ENCODE measurements at regions of chr19 and their contacts with region 1.

Region 1: DNA sequence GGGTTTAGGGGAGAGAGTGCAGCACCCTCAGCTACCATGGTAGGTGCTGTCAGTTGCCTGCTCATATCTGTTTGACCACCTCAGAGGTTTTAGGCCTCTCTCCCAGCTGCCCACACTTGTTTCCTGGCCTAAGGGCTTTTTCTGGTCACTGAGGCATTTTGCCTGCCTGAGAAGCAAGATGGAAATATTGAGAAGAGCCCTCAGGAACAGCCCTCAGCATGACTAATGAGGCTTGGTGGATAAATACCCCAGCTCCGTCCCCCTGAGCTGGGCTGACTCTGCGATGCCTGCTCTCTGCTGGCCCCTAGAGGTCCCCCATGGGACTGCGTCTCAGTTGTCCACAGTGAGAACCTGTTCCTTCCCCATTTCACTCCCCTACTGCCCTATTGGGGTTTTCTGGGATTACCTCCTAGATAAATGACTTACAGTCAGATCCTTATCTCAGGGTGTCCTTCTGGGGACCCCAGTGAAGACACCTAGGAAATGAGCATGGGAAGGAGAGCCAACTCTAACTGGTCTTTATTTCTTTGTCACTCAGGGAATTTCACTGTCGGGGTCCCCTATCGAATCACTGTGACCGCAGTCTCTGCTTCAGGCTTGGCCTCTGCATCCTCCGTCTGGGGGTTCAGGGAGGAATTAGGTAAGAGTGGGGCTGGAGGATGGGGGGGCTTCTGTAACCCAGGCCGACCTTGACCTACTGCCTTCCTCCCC is 13.3 kb downstream of the PALM3 start:
- DNase-seq: peak; percentile 46 to 80 (median 67)
- ATAC-seq: peak; percentile 96
- H3K4me3 ChIP-seq: no peak overlapping the region
- H3K4me3 Mint-ChIP-seq: no peak overlapping the region
- H3K27ac ChIP-seq: peak overlapping the region; percentile 42
- H3K27ac Mint-ChIP-seq: peak overlapping the region in 8 of 9 donors; percentile 21 to 77 (median 61)
- H3K4me1 ChIP-seq: peaks cover 0 to 4% of the 10 kb centered on the region in 2 donors
- H3K4me1 Mint-ChIP-seq: peaks cover 0 to 5% (median 0%) of the 10 kb centered on the region in 7 donors
- H3K27me3 ChIP-seq: no peaks in the 10 kb centered on the region
- H3K27me3 Mint-ChIP-seq: no peaks in the 10 kb centered on the region

Region 2: DNA sequence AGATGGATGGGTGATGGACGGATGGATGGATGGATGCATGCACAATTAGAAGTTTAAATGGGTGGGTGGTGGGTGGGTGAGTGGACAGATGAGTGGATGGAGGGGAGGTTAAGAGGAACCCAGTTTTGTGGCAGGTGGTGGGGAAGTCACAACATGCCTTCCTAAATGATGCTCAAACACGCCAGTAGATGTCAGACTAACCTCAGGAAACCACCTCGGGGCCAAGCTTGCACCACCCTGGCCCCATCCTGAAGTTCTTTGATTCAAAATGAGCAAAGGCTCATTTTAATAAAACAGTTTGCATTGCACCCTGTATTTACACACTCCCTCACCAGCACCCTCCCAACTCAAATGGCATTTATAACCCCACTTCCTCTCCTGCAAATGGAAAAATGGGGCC is 451.0 kb before region 1 on chr19:
- CTCF ChIA-PET with region 1: no interaction called
- POLR2A ChIA-PET with region 1: no interaction called
- intact Hi-C with region 1: loop called in 1 of 2 experiments (anchors 10 kb)
- DNase-seq: peak in 8 of 9 donors; percentile 10 to 54 (median 34)
- ATAC-seq: peak; percentile 73
- H3K4me3 ChIP-seq: no peak overlapping the region
- H3K4me3 Mint-ChIP-seq: no peak overlapping the region
- H3K27ac ChIP-seq: no peak overlapping the region
- H3K27ac Mint-ChIP-seq: no peak overlapping the region
- H3K4me1 ChIP-seq: no peaks in the 10 kb centered on the region
- H3K4me1 Mint-ChIP-seq: peaks cover 0 to 4% (median 0%) of the 10 kb centered on the region in 7 donors
- H3K27me3 ChIP-seq: peaks cover 0 to 4% of the 10 kb centered on the region in 2 donors
- H3K27me3 Mint-ChIP-seq: peaks cover 4 to 32% (median 31%) of the 10 kb centered on the region in 5 donors

Region 3: DNA sequence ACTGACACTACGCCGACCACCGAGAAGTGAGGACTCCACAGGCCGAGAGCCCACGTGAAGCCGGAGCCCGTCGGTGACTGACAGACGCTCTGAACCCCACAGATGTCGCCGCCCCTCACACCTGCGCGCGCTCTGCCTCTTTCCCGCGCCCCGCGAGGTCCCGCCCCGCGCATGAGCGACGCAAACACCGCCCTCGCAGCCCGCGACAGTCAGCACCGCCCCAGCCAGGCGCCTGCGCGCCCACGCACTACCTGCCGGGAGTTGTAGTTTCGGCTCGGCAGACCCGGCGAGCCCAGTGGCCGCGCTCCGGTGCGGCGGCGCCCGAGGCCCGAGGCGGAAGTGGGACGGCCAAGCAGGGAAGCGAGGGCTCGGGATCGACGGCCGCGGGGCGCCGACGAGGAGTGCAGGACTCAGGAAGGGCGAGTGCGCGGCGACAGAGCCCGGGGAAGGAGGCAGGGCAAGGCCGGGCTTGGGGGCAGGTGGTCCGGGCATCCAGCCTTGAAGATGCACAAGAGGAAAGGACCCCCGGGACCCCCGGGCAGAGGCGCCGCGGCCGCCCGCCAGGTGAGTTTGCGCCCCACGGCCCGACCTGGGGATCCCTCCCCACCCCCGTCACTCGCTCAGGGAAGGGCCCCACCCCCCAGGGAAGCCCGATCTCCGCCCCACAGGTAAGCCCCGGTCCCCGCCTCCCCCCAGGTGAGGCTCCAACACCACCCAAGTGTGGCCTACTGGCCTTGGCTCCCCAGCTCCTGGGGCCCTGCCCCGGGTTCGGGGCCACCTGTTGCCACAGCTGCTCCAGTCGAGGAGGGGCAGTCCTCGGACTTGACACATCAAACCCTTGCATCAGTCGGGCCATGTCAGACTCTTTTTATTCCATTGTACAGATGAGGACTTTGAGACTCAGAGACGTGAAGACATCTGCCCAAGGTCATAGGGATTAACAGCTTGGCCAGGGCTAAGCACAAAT is 142.4 kb before region 1 on chr19 and contains the starts of genes BRME1 and CC2D1A:
- CTCF ChIA-PET with region 1: interaction called, 3 read pairs
- POLR2A ChIA-PET with region 1: interaction called, 3 read pairs
- intact Hi-C with region 1: loop called in 1 of 2 experiments (anchors 1 kb)
- DNase-seq: peak; percentile 87 to 94 (median 92)
- ATAC-seq: peak; percentile 100
- H3K4me3 ChIP-seq: peak within 1 kb of the TSS; percentile 84
- H3K4me3 Mint-ChIP-seq: peak within 1 kb of the TSS; percentile 84 to 94 (median 88)
- H3K27ac ChIP-seq: peak within 1 kb of the TSS; percentile 77
- H3K27ac Mint-ChIP-seq: peak within 1 kb of the TSS; percentile 83 to 94 (median 91)
- H3K4me1 ChIP-seq: peaks cover 12% of the 10 kb centered on the region in 2 donors
- H3K4me1 Mint-ChIP-seq: peaks cover 12 to 29% (median 16%) of the 10 kb centered on the region in 7 donors
- H3K27me3 ChIP-seq: no peaks in the 10 kb centered on the region
- H3K27me3 Mint-ChIP-seq: no peaks in the 10 kb centered on the region
- total RNA-seq, gene BRME1: 1.8 to 13.7 (median 2.9) TPM
- total RNA-seq, gene CC2D1A: 21.0 to 33.1 (median 29.8) TPM

Region 4: GRCh38 chr19:13959962-13960862 is 88.4 kb before region 1 on chr19:
- CTCF ChIA-PET with region 1: interaction called, 3 read pairs
- POLR2A ChIA-PET with region 1: interaction called, 5 read pairs
- intact Hi-C with region 1: loop called in 1 of 2 experiments (anchors 1 kb)
- DNase-seq: peak in 2 of 9 donors; percentile 29 to 37
- ATAC-seq: peak; percentile 61
- H3K4me3 ChIP-seq: no peak overlapping the region
- H3K4me3 Mint-ChIP-seq: no peak overlapping the region
- H3K27ac ChIP-seq: no peak overlapping the region
- H3K27ac Mint-ChIP-seq: peak overlapping the region in 3 of 9 donors; percentile 31 to 75 (median 43)
- H3K4me1 ChIP-seq: no peaks in the 10 kb centered on the region
- H3K4me1 Mint-ChIP-seq: peaks cover 0 to 5% (median 3%) of the 10 kb centered on the region in 7 donors
- H3K27me3 ChIP-seq: no peaks in the 10 kb centered on the region
- H3K27me3 Mint-ChIP-seq: no peaks in the 10 kb centered on the region

Region 5: DNA sequence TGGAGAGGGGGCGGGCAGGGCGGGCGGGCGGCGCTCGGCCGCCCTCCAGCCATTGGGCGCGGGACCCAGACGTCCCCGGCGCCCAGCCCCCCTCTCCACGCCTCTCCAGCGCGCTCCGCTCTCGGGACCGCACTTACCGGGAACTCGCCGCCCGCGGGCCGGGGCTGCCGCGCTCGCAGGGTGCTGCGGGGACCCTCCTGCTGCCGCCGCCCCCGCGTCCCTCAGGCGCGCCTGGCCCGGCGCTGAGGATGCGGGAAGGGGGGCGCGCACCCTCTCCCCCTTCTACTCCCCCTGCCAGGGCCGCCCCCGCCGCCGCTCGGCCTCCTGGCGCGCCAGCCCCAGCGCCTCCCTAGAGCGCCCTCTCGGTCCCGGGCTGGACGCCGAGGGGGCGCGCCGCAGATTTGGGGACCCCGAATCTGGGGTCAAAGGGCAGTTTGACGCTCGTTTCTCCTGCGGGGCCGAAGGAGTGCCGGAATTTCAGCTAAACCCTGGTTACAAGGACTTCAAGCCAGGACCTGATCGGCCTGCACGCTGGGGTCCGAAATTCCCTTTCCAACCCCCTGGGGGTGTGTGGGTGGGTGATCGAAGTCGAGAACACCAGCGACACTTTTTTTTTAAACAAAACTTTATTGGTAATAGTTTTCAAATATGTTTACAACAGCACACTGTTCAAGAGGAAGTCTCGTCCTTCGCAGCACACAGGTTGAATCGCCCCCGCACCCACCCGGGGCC is 42.6 kb after region 1 on chr19:
- CTCF ChIA-PET with region 1: no interaction called
- POLR2A ChIA-PET with region 1: no interaction called
- intact Hi-C with region 1: no loop called
- DNase-seq: peak; percentile 56 to 89 (median 84)
- ATAC-seq: peak; percentile 71
- H3K4me3 ChIP-seq: peak overlapping the region; percentile 99
- H3K4me3 Mint-ChIP-seq: peak overlapping the region; percentile 81 to 100 (median 98)
- H3K27ac ChIP-seq: peak overlapping the region; percentile 89
- H3K27ac Mint-ChIP-seq: peak overlapping the region; percentile 89 to 100 (median 98)
- H3K4me1 ChIP-seq: peaks cover 8 to 10% of the 10 kb centered on the region in 2 donors
- H3K4me1 Mint-ChIP-seq: peaks cover 13 to 21% (median 18%) of the 10 kb centered on the region in 7 donors
- H3K27me3 ChIP-seq: no peaks in the 10 kb centered on the region
- H3K27me3 Mint-ChIP-seq: no peaks in the 10 kb centered on the region

Region 6: DNA sequence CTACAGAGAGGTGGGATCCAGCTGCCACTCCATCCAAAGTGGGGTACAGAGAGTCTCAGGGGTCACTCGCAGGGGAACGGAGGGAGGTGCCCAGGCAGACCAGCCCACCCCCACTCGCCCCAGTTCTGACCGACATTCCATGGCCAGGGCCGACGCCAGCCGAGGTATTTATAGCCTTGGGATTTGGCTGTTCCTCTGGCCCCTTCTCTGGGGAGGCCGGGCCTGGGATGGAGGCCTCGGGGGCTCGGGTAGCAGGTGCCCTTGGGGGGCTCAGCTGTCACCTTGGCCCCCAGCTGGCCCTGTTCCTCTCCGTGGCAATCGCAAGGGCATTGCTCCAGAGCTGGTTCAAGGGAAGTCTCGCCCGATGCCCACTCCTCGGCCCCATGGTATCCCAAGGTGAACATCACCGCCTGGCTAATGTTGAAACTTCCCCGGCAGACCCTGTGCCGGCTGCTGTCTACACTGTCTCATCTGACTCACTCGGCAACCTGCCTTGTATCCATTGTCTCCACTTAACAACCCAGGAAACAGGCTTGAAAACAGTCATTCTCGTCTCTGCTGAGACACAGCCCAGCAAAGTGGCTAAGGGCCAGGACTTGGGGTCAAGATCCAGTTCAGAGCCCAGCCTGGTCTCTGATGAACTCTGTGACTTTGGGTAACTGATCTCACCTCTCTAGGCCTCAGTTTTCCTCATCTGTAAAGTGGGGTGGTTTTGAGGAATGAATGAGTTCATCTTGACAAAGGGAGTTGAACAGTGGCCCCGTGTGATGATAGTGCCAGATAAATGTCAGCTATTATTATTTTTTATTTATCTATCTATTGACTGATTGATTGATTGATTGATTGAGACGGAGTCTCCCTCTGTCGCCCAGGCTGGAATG is 59.2 kb after region 1 on chr19:
- CTCF ChIA-PET with region 1: no interaction called
- POLR2A ChIA-PET with region 1: no interaction called
- intact Hi-C with region 1: no loop called
- DNase-seq: no peak
- ATAC-seq: no peak
- H3K4me3 ChIP-seq: no peak overlapping the region
- H3K4me3 Mint-ChIP-seq: no peak overlapping the region
- H3K27ac ChIP-seq: no peak overlapping the region
- H3K27ac Mint-ChIP-seq: peak overlapping the region in 1 of 9 donors; percentile 43
- H3K4me1 ChIP-seq: peaks cover 0 to 14% of the 10 kb centered on the region in 2 donors
- H3K4me1 Mint-ChIP-seq: peaks cover 5 to 23% (median 19%) of the 10 kb centered on the region in 7 donors
- H3K27me3 ChIP-seq: no peaks in the 10 kb centered on the region
- H3K27me3 Mint-ChIP-seq: no peaks in the 10 kb centered on the region

Measured in naive thymus-derived CD4-positive, alpha-beta T cell (primary cell).